ENCODE measurements at regions of chr20 and their contacts with region 1.

Region 1: GRCh38 chr20:38581013-38581412 is at the start of gene ADIG:
- DNase-seq: no peak
- H3K4me3 ChIP-seq: no peak within 1 kb of the TSS
- H3K27ac ChIP-seq: no peak within 1 kb of the TSS
- H3K4me1 ChIP-seq: no peaks in the 10 kb centered on the region
- H3K27me3 ChIP-seq: no peaks in the 10 kb centered on the region
- CTCF ChIP-seq: no peak
- POLR2A ChIP-seq: no peak
- total RNA-seq, gene ADIG: not detected

Region 2: GRCh38 chr20:38603286-38603685 is 22.3 kb after region 1 on chr20:
- intact Hi-C with region 1: loop called (anchors 1 kb)
- DNase-seq: no peak
- H3K4me3 ChIP-seq: no peak overlapping the region
- H3K27ac ChIP-seq: no peak overlapping the region
- H3K4me1 ChIP-seq: peaks cover 5% of the 10 kb centered on the region
- H3K27me3 ChIP-seq: no peaks in the 10 kb centered on the region
- CTCF ChIP-seq: no peak
- POLR2A ChIP-seq: no peak

Region 3: GRCh38 chr20:38723017-38723847 is 142.2 kb after region 1 on chr20:
- intact Hi-C with region 1: no loop called
- DNase-seq: no peak
- H3K4me3 ChIP-seq: no peak overlapping the region
- H3K27ac ChIP-seq: no peak overlapping the region
- H3K4me1 ChIP-seq: peaks cover 32% of the 10 kb centered on the region
- H3K27me3 ChIP-seq: peaks cover 45% of the 10 kb centered on the region
- CTCF ChIP-seq: no peak
- POLR2A ChIP-seq: no peak